ENCODE measurements at regions of chr3 and their contacts with region 1.

Region 1: DNA sequence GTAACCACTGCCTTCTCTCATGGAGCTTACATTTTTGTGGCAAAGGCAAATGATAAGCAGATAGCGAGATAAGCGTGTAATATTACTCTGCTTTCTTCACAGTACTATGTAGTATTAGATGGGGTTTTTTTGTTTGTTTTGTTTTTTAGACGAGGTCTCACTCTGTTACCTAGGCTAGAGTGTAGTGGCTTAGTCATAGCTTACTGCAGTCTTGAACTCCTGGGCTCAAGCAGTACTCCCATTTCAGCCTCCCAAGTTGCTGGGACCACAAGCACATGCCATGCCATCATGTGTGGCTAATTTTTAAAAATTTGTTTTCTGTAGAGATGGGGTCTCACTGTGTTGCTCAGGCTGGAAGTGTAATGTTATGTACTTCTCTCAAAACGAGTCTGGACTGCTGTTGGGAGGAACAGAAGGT is 22.9 kb downstream of the MBNL1 start:
- DNase-seq: no peak
- H3K4me3 ChIP-seq: no peak overlapping the region
- H3K27ac ChIP-seq: no peak overlapping the region
- H3K4me1 ChIP-seq: peaks cover 56% of the 10 kb centered on the region
- CTCF ChIP-seq: no peak

Region 2: GRCh38 chr3:152302521-152303021 is 10.9 kb after region 1 on chr3:
- CTCF ChIA-PET with region 1: interaction called, 3 read pairs
- POLR2A ChIA-PET with region 1: interaction called, 10 read pairs
- intact Hi-C with region 1: no loop called
- DNase-seq: no peak
- H3K4me3 ChIP-seq: no peak overlapping the region
- H3K27ac ChIP-seq: no peak overlapping the region
- H3K4me1 ChIP-seq: peaks cover 47% of the 10 kb centered on the region
- CTCF ChIP-seq: no peak

Region 3: GRCh38 chr3:152729906-152730305 is 438.2 kb after region 1 on chr3:
- CTCF ChIA-PET with region 1: no interaction called
- POLR2A ChIA-PET with region 1: no interaction called
- intact Hi-C with region 1: no loop called
- DNase-seq: no peak
- H3K4me3 ChIP-seq: no peak overlapping the region
- H3K27ac ChIP-seq: no peak overlapping the region
- H3K4me1 ChIP-seq: no peaks in the 10 kb centered on the region
- CTCF ChIP-seq: no peak

Measured in OCI-LY7 (cell line).